ENCODE measurements at regions of chr4 and their contacts with region 1.

Region 1: GRCh38 chr4:55038176-55038890 is 87.1 kb downstream of the KDR start:
- DNase-seq: no peak

Region 2: DNA sequence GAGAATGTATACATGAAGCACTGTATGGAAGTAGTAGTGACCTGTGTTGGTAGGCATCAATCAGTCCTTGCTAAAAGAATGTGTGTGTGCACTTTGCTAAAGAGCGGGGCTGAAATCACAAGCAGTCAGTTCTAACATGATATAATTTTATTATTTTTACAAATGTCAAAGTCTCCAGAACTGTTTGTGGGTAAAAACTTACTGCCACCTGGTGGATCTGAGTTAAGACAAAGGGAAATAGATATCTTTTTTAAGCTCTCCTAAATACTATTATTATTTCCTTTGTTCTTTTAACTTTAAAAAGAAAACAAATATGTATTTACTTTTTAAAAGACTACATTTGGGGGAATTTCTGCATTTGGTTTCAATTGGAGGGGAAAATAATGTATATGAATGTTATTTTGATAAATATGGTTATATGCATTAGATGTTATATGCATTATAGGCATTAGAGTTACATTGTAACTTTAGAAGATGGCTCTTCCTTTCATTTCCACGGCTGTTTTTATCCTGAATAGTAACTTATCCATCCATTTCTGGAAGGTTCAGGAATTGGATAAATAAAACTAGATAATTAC is 516.2 kb after region 1 on chr4:
- intact Hi-C with region 1: loop called in 1 of 2 experiments (anchors 5 kb)
- DNase-seq: no peak

Region 3: DNA sequence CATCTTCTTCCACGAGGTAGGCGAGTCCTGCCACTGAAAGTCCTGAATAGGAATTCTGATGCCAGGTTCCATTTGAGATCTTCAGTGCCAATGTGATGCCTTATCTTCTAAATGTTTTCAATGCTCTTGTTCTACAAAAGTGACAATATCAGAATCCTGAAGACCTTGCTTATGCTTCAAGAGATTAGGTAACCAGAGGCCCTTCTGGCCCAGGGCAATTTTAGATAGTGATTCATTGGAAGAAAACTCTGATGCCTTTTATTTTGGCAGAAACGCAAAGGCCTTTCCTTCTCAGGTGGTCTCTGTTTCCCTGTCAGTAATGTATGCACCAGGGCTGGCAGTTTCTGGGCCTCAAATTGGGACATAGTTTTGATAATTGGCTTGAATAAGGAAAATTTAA is 1055.2 kb after region 1 on chr4:
- intact Hi-C with region 1: loop called in 1 of 2 experiments (anchors 5 kb)
- DNase-seq: no peak

Region 4: DNA sequence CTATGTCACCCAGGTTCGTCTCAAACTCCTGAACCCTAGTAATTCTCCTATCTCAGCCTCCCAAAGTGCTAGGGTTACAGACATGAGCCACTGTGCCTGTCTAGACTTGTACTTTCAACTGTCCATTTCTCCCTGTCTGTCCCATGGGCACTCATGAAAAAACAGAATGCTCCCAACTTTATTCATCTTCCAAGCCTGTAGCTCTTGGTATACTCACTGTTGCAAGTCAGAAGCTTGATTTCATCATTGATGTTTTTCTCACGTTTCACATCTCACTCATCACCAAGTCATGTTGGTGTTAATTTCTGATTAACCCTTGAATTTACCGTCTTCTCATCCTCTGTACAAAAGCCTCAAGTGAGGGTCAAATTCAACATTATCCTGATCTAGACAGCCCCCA is 1421.8 kb after region 1 on chr4:
- intact Hi-C with region 1: no loop called
- DNase-seq: no peak

Measured in posterior vena cava (tissue), 2 donors.